RWPE1 (cell line): ENCODE measurements at regions of chr9 and their contacts with region 1.

Region 1: DNA sequence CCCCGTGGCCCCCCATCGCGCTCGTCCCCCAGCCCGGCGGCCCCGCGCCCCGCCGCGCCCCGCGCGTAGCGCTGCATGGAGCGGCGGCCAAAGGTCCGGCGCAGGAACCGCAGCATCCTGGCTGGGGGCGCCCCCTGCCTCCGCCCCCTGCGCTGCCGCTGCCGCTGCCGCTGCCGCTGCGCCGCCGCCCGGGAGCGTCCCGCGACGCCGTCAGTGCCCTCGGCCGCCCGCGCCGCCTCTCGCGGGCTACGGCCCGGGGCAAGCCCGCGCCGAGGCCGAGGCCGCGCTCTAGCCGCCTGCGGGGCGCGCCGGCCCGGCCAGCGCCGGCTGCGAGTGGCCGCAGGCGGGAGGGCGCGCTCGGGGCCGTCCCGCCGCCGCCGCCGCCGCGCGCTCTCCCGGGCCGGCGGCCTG is 523 bp downstream of the EPB41L4B start:
- DNase-seq: no peak
- H3K27ac ChIP-seq: peak overlapping the region; percentile 84
- CTCF ChIP-seq: no peak

Region 2: GRCh38 chr9:109182940-109183798 is 137.2 kb before region 1 on chr9:
- CTCF ChIA-PET with region 1: interaction called, 16 read pairs
- POLR2A ChIA-PET with region 1: no interaction called
- DNase-seq: peak; percentile 64
- H3K27ac ChIP-seq: no peak overlapping the region
- CTCF ChIP-seq: peak; percentile 60

Region 3: GRCh38 chr9:109344866-109345265 is 24.5 kb after region 1 on chr9:
- CTCF ChIA-PET with region 1: interaction called, 17 read pairs
- POLR2A ChIA-PET with region 1: interaction called, 3 read pairs
- DNase-seq: no peak
- H3K27ac ChIP-seq: peak overlapping the region; percentile 78
- CTCF ChIP-seq: no peak